Naive thymus-derived CD4-positive, alpha-beta T cell (primary cell): ENCODE measurements at regions of chr22 and their contacts with region 1.

Region 1: DNA sequence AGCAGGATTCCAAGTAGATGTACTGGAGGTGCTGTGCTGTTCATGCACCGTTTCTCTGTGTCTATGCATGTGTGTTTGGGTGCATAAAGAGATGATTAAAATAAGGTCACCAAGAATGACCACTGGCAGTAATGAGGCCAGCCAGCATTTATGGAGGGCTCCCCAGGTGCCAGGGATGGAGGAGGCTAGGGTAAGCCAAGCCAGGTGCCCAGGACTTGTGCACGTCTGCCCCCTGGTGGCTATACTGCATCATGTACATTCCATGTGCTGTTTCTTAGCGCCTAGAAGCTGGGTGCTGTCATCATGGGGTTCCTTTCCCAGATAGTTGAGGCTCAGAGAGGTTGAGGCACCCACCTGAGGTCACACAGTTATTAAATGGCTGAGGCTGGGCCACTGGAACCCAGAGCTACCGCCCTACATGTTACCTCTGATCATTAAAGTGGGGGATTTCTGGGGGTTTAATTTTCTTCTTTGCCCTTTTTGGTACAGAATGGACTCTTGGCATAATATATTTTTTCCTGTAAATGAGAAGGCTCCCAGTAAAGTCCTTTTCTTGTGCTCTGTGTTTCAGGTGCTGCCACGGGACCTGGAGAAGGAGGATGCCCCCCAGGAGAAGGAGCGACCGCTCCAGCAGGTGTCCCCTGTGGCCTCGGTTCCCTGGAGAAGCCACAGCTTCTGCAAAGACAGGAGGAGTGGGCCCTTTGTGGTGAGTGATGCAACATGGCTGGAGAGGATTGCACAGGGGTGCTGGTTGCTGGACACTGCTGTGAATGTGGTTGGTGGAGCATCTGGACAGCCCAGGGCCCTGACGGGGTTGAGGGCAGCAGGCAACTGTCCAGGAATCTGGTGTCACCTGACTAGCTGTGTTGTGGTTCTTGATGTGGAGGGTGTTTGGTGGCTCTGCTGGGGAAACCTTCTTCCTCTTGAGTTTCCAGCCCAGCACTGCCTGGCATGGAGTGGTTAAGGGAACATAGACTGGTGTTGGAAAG is 96.4 kb downstream of the KIAA1671 start:
- DNase-seq: peak; percentile 39 to 73 (median 60)
- ATAC-seq: peak; percentile 91
- H3K4me3 ChIP-seq: no peak overlapping the region
- H3K4me3 Mint-ChIP-seq: no peak overlapping the region
- H3K27ac ChIP-seq: no peak overlapping the region
- H3K27ac Mint-ChIP-seq: peak overlapping the region in 2 of 9 donors; percentile 46 to 56
- H3K4me1 ChIP-seq: no peaks in the 10 kb centered on the region
- H3K4me1 Mint-ChIP-seq: peaks cover 0 to 2% (median 0%) of the 10 kb centered on the region in 7 donors
- H3K27me3 ChIP-seq: no peaks in the 10 kb centered on the region
- H3K27me3 Mint-ChIP-seq: peaks cover 0 to 5% (median 2%) of the 10 kb centered on the region in 5 donors

Region 2: GRCh38 chr22:24768537-24769374 is 280.2 kb before region 1 on chr22:
- CTCF ChIA-PET with region 1: interaction called, 4 read pairs
- POLR2A ChIA-PET with region 1: no interaction called
- intact Hi-C with region 1: loop called in 1 of 2 experiments (anchors 2 kb)
- DNase-seq: peak in 5 of 9 donors; percentile 12 to 48 (median 21)
- ATAC-seq: peak; percentile 42
- H3K4me3 ChIP-seq: no peak overlapping the region
- H3K4me3 Mint-ChIP-seq: no peak overlapping the region
- H3K27ac ChIP-seq: no peak overlapping the region
- H3K27ac Mint-ChIP-seq: no peak overlapping the region
- H3K4me1 ChIP-seq: no peaks in the 10 kb centered on the region
- H3K4me1 Mint-ChIP-seq: peaks cover 0 to 6% (median 0%) of the 10 kb centered on the region in 7 donors
- H3K27me3 ChIP-seq: no peaks in the 10 kb centered on the region
- H3K27me3 Mint-ChIP-seq: peaks cover 0 to 19% (median 5%) of the 10 kb centered on the region in 5 donors

Region 3: DNA sequence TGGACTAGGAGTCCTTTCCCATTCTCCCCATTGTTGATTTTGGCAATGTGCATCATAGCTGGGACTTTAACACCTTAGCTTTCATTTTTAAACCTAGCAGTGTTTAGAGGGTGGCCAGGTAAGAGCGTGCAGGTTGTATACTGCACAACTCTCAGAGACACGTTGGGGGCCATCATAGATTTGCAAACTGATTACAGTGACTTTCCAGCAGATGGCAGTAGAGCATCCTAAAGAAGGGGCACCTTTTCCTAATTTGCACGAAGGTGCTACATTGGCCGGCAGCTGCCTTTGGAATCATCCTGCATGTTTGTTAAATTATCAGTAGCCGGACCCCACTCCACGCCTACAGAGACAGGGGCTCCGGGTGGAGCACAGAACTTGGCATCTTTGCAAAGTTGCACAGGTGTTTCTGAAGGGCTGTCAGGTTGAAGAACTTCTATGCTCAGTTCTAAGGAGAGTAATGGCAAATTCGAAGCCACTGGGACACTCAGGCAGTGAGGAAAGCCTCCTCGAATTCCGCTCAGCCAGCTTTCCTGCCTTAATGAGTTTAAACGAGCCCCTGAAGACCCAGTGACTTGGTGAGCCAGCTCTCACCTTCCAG is 110.1 kb before region 1 on chr22:
- CTCF ChIA-PET with region 1: interaction called, 15 read pairs
- POLR2A ChIA-PET with region 1: interaction called, 3 read pairs
- intact Hi-C with region 1: loop called (anchors 1 kb)
- DNase-seq: peak in 6 of 9 donors; percentile 25 to 48 (median 34)
- ATAC-seq: peak; percentile 73
- H3K4me3 ChIP-seq: no peak overlapping the region
- H3K4me3 Mint-ChIP-seq: no peak overlapping the region
- H3K27ac ChIP-seq: no peak overlapping the region
- H3K27ac Mint-ChIP-seq: no peak overlapping the region
- H3K4me1 ChIP-seq: no peaks in the 10 kb centered on the region
- H3K4me1 Mint-ChIP-seq: no peaks in the 10 kb centered on the region
- H3K27me3 ChIP-seq: peaks cover 0 to 4% of the 10 kb centered on the region in 2 donors
- H3K27me3 Mint-ChIP-seq: peaks cover 0 to 15% (median 4%) of the 10 kb centered on the region in 5 donors

Region 4: DNA sequence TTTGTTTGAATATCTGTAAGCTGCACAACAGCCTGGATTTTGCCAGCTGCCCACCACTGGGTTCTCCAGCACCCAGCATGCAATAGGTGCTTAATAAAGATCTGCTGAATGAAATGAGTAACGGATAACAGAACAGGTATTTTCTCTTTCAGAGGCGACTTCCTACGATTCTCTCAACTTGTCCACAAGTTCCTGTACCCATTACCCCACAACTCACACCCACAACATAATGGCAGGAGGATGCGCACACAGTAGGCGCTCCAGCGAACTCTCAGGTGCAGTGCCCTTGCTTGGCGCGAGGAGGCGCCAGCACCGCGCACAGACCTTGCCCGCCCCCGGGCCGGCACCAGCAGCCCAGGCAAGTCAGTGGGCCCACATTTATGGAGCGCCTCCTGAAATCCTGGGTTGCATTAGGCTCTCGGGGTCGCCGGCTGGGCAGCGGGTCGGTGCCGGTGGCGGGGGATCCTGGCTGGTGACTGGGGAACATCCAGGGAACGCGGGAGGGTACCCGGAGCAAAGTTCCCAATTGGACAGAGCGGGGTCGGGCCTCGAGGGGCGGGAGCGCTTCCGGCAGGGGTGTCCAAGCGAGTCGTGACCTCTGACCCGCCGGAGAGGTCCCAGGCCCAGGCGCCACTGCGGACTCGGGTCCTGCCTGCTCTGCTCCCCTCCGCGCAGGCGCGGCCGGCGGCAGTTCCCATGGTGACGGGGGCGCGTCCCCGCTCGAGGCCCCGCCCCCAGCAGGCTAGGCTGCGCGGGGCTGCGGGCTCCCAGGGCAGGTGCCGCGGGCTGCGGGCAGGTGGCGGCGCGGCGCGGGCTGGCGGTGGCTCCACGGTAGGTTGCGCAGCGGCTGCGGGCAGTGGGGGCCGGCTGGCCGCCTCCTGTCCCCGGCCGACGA is 96.8 kb before region 1 on chr22 and contains the start of gene KIAA1671:
- CTCF ChIA-PET with region 1: interaction called, 5 read pairs
- POLR2A ChIA-PET with region 1: no interaction called
- intact Hi-C with region 1: loop called (anchors 1 kb)
- DNase-seq: peak; percentile 78 to 95 (median 88)
- ATAC-seq: peak; percentile 96
- H3K4me3 ChIP-seq: peak within 1 kb of the TSS; percentile 86
- H3K4me3 Mint-ChIP-seq: peak within 1 kb of the TSS; percentile 64 to 88 (median 80)
- H3K27ac ChIP-seq: no peak within 1 kb of the TSS
- H3K27ac Mint-ChIP-seq: peak within 1 kb of the TSS in 5 of 9 donors; percentile 49 to 83 (median 65)
- H3K4me1 ChIP-seq: peaks cover 8 to 9% of the 10 kb centered on the region in 2 donors
- H3K4me1 Mint-ChIP-seq: peaks cover 4 to 32% (median 16%) of the 10 kb centered on the region in 7 donors
- H3K27me3 ChIP-seq: peaks cover 3% of the 10 kb centered on the region in 2 donors
- H3K27me3 Mint-ChIP-seq: peaks cover 48 to 74% (median 55%) of the 10 kb centered on the region in 5 donors
- total RNA-seq, gene KIAA1671: 2.8 to 19.0 (median 4.5) TPM

Region 5: DNA sequence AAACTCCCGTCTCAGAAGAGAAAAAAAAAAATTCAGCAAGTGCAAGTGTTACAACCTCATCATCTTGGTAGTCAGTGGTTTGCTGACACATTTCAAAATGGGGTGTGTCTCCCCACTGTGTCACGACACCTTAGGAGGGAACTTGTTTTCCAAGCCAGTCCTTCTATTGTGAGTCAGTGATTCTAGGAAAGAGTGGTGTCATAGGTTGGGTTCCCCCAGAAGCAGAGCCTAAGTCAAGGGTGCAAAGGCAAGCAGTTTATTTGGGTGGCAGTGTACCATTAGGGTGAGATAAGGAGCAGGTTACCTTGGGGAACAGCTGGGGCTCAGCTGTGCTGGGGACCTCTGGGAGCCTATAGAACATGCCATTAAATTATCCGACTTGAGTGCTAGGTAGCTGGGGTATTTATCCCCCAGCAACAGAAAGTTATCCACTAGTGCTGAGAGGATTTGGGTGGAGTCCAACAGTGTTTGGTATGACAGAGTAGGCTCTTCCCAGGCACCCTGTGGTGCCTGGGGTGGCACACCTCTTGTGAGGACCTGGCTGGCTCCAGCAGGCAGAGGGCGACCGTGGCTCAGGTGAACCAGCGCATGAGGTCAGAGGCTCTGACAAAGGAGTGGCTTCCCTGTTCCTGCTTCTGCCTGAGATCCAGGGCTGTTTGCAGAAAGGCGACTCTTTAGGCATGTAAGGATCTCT is 54.7 kb before region 1 on chr22:
- CTCF ChIA-PET with region 1: no interaction called
- POLR2A ChIA-PET with region 1: no interaction called
- intact Hi-C with region 1: loop called in 1 of 2 experiments (anchors 1 kb)
- DNase-seq: peak in 1 of 9 donors; percentile 53
- ATAC-seq: no peak
- H3K4me3 ChIP-seq: no peak overlapping the region
- H3K4me3 Mint-ChIP-seq: peak overlapping the region in 1 of 10 donors; percentile 65
- H3K27ac ChIP-seq: no peak overlapping the region
- H3K27ac Mint-ChIP-seq: peak overlapping the region in 1 of 9 donors; percentile 89
- H3K4me1 ChIP-seq: no peaks in the 10 kb centered on the region
- H3K4me1 Mint-ChIP-seq: peaks cover 0 to 66% (median 0%) of the 10 kb centered on the region in 7 donors
- H3K27me3 ChIP-seq: no peaks in the 10 kb centered on the region
- H3K27me3 Mint-ChIP-seq: peaks cover 9 to 28% (median 20%) of the 10 kb centered on the region in 5 donors